H1 (cell line): ENCODE measurements at regions of chr1 and their contacts with region 1.

Region 1: DNA sequence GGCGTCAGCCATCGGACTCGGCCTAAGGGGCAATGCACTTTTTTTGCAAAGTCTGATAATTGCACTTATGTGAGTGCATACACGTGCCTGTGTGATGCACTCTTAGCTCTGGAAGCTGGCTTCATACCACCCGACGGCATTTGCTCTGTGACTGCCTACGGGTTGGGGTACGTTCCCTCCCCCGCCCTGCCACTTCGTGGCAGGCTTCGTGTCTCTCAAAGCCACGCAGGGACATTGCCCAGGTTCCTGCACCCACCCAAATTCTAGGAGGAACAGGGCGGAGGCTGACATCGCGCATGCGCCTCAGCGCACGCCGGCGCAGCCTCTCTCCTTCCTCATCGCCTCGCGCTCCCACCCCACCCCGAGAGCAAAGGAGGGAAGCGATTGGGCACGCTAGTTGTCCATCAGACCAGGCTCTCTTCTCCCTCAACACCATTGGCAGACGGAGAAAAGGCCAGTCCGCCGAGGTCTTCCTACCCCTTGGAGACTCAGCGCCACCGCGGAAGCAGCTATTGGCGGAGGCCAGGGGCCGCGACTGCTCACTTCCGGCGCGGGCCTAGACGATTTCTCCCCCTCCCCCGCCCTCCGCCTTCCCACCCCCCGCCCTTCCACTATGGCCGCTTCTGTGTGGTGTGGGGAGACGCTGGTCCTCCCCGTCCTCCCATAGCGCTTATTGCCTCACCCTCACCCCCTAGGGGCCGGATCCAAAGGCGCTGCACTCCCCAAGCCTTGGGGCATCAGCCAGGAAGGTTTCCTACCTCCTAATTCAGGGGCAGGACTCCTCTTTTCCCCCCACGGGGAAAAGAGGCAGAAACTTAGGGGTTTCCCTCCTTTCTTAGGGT is at the start of gene INTS3:
- DNase-seq: peak; percentile 97 to 99
- H3K4me3 ChIP-seq: peak within 1 kb of the TSS; percentile 78 to 96 (median 86)
- H3K27ac ChIP-seq: peak within 1 kb of the TSS; percentile 88
- H3K4me1 ChIP-seq: peaks cover 0 to 11% (median 3%) of the 10 kb centered on the region in 4 experiments; a peak in 6 of 7 replicates
- H3K27me3 ChIP-seq: no peaks in the 10 kb centered on the region
- CTCF ChIP-seq: peak in 1 of 3 experiments; percentile 11; a peak in 1 of 4 replicates
- EP300 ChIP-seq: no peak
- POLR2A ChIP-seq: peak; percentile 40 to 56
- RAD21 ChIP-seq: no peak; a peak in 1 of 4 replicates
- total RNA-seq, gene INTS3: 63.2 and 66.8 TPM in 2 replicates

Region 2: DNA sequence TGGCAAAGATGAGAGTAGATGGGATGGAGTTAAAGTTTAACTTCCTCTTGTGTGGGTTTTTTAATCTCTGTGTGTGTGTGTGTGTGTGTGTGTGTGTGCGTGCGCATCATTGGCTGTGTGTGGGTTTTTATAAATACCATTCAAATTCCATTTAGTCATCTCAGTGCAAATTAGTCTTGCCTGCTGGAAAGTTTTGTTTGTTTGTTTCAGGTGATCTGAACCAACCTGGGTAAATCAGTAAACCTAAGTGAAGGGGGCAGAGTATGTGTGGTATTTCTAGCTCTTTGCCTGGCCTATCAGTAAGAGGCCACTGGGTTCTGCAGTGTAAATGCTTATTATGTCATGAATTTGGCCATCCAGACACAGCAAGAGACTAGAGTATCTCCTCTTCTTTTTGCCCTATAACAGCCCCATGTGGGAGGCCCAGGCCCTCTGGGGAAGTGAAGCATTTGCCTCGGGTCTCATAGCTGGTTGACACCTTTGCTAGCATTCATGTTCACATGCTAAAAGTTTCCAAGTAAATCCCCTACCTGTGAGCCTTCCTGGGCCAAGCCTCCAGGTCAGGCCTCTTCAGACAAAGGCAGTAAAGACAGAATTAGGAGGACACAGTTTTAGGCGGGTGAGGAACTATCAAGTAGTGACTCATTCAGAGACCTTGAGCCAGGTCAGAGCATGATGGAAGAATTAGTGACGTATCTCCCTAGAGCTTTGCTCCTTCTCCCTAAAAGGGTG is 14.9 kb after region 1 on chr1:
- CTCF ChIA-PET with region 1: interaction called, 9 read pairs
- POLR2A ChIA-PET with region 1: interaction called, 60 read pairs
- DNase-seq: no peak
- H3K4me3 ChIP-seq: no peak overlapping the region
- H3K27ac ChIP-seq: no peak overlapping the region
- H3K4me1 ChIP-seq: peaks cover 6 to 46% (median 17%) of the 10 kb centered on the region in 4 experiments; a peak in 6 of 7 replicates
- H3K27me3 ChIP-seq: peaks cover 0 to 2% (median 0%) of the 10 kb centered on the region in 4 experiments; a peak in 1 of 7 replicates
- CTCF ChIP-seq: no peak
- EP300 ChIP-seq: no peak
- POLR2A ChIP-seq: no peak
- RAD21 ChIP-seq: no peak